ENCODE measurements at regions of chr2 and their contacts with region 1.

Region 1: DNA sequence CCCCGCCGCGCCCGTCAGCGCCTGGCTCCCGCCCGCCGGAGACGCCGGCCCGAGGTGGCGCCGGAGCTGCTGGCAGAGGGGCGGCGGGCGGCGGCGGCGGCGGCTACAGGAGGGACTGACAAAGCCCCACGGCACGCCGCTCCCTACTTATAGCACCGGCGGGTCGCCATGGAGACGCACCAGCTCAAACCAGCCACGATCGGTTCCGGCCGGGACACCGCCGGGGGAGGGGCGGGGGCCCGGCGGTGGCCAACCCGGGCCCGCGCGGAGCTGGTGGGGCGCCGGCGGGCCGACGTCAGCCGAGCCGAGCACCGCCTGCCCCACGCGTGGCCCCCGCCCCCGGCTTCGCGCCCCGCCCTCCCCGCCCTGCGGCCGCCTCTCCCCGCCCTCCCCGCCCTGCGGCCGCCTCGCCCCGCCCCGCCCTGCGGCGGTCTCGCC is at the start of gene ODC1:
- DNase-seq: peak; percentile 96
- H3K4me3 Mint-ChIP-seq: peak within 1 kb of the TSS; percentile 85
- H3K27ac Mint-ChIP-seq: peak within 1 kb of the TSS; percentile 82
- H3K4me1 Mint-ChIP-seq: peaks cover 54% of the 10 kb centered on the region
- H3K27me3 Mint-ChIP-seq: no peaks in the 10 kb centered on the region
- total RNA-seq, gene ODC1: 48.1 to 54.9 TPM

Region 2: DNA sequence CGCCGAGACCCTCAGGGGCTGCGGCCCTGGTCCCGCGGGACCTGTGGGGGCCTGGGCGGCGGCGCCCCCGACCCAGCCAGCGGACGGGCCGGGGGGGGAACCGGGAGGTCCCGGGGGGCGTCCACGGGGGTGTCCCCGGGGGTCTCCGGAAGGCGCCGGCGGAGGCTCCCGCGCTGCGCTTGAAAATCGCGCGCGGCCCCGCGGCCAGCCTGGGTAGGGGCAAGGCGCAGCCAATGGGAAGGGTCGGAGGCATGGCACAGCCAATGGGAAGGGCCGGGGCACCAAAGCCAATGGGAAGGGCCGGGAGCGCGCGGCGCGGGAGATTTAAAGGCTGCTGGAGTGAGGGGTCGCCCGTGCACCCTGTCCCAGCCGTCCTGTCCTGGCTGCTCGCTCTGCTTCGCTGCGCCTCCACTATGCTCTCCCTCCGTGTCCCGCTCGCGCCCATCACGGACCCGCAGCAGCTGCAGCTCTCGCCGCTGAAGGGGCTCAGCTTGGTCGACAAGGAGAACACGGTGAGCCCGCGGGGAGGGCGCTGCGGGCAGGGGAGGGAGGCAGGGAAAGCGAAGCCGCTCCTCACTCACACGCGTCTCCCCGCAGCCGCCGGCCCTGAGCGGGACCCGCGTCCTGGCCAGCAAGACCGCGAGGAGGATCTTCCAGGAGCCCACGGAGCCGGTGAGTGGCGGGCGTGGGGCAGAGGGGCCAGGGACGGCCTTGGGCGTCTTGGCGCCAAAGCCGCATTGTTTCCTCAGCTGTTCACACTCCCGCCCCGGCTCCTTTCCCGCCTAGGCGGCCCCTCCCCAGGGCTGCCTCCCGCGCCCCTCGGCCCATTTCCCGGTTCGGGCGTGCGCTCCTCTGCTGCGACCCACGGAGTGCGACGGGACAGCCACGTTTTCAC is 325.6 kb before region 1 on chr2 and contains the start of gene RRM2:
- CTCF ChIA-PET with region 1: interaction called, 6 read pairs
- POLR2A ChIA-PET with region 1: interaction called, 58 read pairs
- DNase-seq: peak; percentile 96
- H3K4me3 Mint-ChIP-seq: peak within 1 kb of the TSS; percentile 97
- H3K27ac Mint-ChIP-seq: peak within 1 kb of the TSS; percentile 98
- H3K4me1 Mint-ChIP-seq: peaks cover 67% of the 10 kb centered on the region
- H3K27me3 Mint-ChIP-seq: no peaks in the 10 kb centered on the region
- total RNA-seq, gene RRM2: 546 to 570 TPM

Region 3: DNA sequence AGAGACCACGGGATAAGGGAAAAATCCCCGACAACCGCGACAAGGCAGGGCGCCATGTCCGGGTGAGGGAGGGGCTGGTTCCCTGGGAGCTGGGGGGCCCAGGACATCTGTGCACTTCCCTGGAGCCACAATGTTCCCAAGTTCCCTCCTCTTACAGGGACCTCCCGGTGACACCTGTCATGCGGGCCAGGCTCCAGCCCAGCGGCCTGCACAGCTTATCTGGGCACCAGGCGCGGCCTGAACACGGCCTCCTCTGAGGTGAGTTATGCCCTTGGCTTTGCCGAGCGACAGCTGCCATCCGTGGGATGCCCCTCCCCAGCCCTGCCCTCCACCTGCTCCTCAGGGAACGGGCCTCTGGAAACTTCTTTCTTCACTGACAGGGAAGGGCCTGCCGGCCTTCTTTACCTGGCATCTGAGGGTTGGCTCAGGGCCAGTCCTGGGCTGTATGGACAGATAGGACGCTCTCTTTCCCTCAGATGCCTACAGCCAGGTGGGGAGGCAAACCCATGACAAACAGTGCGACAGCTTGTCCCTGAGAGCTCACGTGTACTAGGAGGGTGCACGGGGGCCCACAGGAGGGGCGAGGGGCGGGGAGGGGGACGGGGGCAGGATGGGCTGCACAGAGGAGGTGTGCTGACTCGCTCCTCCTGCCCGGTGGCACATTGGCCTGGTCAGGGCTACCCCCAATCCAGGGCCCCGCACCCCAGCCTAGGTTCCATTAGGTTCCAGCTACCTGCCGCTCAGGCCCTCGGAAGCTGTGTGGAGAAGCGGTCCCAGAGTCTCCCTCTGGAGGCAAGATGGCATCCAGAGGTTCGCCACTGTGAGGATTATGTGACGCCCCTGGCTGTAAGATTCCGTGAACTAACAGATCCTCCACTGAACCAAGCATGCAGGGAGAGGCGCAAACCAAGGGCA is 180.4 kb before region 1 on chr2:
- CTCF ChIA-PET with region 1: no interaction called
- POLR2A ChIA-PET with region 1: no interaction called
- DNase-seq: no peak
- H3K4me3 Mint-ChIP-seq: no peak overlapping the region
- H3K27ac Mint-ChIP-seq: no peak overlapping the region
- H3K4me1 Mint-ChIP-seq: peaks cover 5% of the 10 kb centered on the region
- H3K27me3 Mint-ChIP-seq: no peaks in the 10 kb centered on the region

Region 4: DNA sequence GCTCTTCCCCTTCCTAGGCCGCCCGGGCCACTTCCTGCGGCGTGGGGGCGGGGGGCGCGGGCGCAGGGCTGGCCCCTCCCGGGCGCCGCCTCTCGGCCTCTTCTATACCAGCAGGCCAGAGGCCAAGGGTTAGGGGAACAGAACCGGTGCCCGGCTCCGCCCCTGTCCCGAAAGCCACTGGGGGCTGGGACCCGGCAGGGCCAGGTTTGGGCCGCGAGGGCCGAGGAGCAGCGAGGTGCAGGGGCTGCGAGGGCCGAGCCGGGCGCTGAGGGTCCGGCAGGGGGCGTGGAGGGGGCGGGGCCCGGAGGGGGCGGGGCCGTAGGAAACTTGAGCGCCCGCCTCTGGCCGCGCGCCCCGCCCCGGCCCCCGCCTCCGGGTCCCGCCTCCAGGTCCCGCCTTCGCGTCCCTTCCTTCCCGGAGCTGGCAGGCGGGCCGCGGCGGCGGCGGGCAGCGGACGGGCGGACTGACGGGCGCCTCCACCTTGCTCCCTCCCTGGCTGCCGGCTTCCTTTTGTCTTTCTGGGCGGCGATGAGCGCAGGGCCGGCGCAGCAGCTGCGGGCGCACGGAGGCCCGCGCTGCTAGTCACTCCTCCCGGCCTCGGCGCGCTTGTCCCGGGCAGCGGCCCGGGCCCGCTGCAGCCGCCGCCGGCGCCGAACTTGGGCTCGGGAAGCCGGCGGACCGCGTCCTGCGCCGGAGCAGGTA is 145.6 kb before region 1 on chr2 and contains the start of gene HPCAL1:
- CTCF ChIA-PET with region 1: interaction called, 6 read pairs
- POLR2A ChIA-PET with region 1: interaction called, 40 read pairs
- DNase-seq: peak; percentile 86
- H3K4me3 Mint-ChIP-seq: peak within 1 kb of the TSS; percentile 98
- H3K27ac Mint-ChIP-seq: peak within 1 kb of the TSS; percentile 82
- H3K4me1 Mint-ChIP-seq: peaks cover 77% of the 10 kb centered on the region
- H3K27me3 Mint-ChIP-seq: no peaks in the 10 kb centered on the region
- total RNA-seq, gene HPCAL1: 70.0 to 71.4 TPM

Region 5: DNA sequence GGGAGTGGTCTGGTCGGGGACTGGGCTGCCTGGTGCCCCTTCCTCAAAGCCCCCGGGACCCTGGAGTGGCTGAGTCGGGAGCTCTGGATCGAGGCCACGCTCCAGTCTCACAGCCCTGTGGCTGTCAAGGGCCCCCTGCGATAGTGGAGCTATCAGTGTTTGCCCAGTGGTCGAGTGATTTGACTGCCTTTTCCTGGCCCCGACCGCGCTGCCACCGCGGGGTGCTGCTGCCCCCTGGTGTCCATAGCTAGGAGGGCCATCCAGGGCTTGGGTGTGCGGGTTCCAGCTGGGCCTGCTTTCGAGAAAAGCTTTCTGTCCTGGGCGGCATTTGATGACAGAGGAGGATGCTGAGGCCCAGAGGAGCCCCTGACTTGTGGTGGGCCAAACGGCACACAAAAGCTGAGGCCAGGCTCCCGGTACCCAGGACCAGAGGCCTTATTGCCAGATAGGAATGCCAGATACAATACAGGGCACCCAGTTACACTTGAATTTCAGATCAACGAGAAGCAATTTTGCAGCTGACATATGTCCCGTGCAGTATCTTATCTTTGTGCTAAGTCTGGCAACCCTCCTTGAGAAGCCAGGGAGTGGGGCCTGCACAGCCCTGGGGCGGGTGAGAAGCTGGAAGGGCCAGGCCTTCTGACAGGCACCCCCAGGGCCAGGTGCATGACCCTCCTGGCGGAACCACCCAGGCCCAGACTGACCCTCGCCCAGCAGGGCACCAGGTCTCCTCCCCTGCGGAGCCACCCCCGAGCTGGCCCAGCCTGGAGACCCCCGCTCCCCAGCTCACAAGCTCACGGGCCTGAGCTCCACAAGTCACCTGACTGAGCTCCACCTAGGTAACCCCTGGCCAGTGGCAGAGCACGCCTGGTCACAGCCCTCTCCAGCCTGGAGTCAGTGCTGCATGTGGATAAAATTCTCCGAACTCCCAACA is 13.1 kb before region 1 on chr2:
- CTCF ChIA-PET with region 1: interaction called, 38 read pairs
- POLR2A ChIA-PET with region 1: interaction called, 36 read pairs
- DNase-seq: peak; percentile 75
- H3K4me3 Mint-ChIP-seq: no peak overlapping the region
- H3K27ac Mint-ChIP-seq: no peak overlapping the region
- H3K4me1 Mint-ChIP-seq: peaks cover 15% of the 10 kb centered on the region
- H3K27me3 Mint-ChIP-seq: peaks cover 12% of the 10 kb centered on the region

Region 6: DNA sequence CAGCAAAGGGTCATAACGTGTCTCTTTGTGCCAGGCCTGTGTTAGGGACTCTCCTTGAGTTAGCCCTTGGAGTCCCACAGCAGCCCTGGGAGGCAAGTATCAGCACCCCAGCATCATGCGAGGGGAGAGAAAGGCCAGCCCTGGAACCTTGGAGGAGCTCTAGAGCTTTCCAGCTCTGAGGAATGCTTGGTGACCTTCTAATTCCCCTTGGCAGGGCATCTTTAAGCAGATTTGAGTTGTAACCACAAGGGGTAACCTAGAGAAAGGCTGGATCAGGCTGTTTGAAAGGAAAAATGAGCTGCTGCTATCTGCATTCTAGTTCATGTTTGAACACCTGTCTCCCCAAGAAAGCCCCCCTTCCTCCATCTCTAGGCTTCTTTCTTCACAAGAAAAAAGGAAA is 23.7 kb after region 1 on chr2:
- CTCF ChIA-PET with region 1: no interaction called
- POLR2A ChIA-PET with region 1: no interaction called
- DNase-seq: no peak
- H3K4me3 Mint-ChIP-seq: no peak overlapping the region
- H3K27ac Mint-ChIP-seq: no peak overlapping the region
- H3K4me1 Mint-ChIP-seq: peaks cover 2% of the 10 kb centered on the region
- H3K27me3 Mint-ChIP-seq: peaks cover 4% of the 10 kb centered on the region

Region 7: DNA sequence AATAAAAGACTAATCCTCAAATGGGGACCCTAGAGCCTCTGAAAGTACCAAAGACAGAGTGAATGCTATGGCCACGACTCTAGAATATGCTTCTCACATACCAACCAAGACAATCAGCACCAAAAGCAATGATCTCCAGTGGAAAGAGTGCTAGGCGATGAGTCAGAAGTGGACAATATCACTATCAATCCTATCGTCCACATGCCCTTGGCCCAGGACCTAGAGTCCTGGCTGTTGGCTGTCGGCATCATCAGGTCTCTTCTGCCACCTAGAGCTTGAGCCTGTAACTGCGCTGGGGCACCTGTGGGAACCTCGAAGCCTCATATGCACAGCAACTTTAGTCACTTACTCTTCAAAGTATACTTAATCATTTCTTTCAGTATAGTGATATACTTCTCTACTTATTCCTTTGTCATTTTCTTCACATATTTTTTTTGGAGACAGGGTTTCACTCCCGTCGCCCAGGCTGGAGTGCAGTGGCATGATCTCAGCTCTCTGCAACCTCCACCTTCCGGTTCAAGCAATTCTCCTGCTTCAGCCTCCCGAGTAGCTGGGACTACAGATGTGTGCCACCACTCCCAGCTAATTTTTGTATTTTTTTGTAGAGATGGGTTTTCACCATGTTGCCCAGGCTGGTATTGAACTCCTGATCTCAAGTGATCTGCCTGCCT is 211.8 kb after region 1 on chr2:
- CTCF ChIA-PET with region 1: interaction called, 28 read pairs
- POLR2A ChIA-PET with region 1: interaction called, 5 read pairs
- DNase-seq: peak; percentile 71
- H3K4me3 Mint-ChIP-seq: no peak overlapping the region
- H3K27ac Mint-ChIP-seq: no peak overlapping the region
- H3K4me1 Mint-ChIP-seq: peaks cover 17% of the 10 kb centered on the region
- H3K27me3 Mint-ChIP-seq: no peaks in the 10 kb centered on the region

Measured in activated CD4-positive, alpha-beta memory T cell treated with anti-CD3 and anti-CD28 coated beads, Interleukin-2, amount 10 ng/mL, durations not matched to agents 7 days and 5 days (primary cell).